Posterior cingulate gyrus (tissue), 11 donors: ENCODE measurements at regions of chr7 and their contacts with region 1.

Region 1: GRCh38 chr7:155003376-155004214 is 671 bp upstream of the PAXIP1 start:
- DNase-seq: peak; percentile 62 to 98 (median 74)

Region 2: DNA sequence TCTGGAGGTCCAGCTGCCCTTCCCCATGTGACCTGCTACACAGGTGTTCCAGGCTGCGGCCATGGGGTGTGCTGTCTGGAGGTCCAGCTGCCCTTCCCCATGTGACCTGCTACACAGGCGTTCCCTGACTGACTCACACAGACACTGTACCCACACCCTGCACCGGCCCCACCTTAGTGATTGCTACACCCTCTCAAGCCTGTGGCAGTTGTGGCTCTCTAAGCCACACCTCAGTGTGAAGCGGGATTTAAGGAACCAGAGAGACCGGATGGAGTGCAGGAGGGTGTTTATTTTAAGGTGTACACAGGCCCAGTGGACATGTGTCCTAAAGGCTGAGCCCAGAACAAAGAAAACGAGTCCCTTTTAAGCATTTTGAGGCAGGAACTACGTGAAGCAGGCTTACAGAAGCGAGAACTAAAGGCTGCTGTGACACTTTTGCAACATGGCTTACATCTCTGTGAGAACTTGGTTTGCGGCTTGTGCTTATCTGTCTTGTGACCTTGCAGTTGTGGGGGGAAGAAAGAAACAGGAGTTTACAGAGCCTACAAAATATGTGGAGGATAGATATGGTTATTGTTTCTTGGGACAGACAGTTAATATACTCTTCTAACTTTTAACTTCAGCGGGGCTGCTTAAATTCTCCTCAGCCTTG is 327.0 kb before region 1 on chr7:
- intact Hi-C with region 1: no loop called
- DNase-seq: peak in 1 of 10 donors; percentile 65

Region 3: DNA sequence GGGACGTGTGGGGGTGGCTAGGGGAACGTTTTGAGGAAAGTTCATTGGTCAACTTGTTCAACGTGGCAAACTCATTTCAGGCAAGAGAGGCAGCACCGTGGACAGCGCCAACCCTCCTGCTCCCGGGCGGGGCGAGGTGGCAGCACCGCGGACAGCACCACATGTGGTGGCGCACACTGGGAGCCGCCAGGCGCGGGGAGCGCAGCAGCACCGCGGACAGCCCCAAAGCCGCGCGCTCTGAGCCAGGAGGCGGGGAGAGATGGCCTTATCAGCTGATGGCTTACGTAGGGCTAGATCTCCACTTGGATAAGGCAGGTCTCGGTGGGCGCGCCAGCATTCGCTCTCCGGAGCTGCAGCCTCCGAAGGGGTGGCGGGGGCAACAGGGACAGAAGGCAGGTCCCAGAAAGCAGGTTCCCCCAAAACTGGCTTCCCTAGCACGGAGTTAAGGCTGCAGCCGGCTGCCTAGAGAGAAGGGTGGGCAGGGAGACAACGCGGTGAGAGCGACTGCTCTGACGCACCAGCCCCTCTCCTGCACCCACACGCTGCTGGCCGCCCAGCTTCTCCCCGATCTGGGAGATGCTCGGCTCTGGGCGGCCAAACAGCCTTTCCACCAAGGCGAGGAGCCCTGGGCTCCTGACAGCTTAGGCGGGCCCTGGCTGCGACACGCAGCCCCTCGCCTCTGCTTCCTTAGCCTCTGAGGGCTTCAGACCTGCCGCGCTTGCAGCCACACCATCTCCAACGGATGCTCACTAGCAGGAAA is 66.6 kb after region 1 on chr7 and contains the start of gene HTR5A:
- intact Hi-C with region 1: loop called (anchors 5 kb)
- DNase-seq: peak; percentile 55 to 96 (median 74)

Region 4: GRCh38 chr7:155344600-155345433 is 341.2 kb after region 1 on chr7:
- intact Hi-C with region 1: loop called (anchors 5 kb)
- DNase-seq: peak; percentile 44 to 96 (median 80)